ENCODE measurements at regions of chr7 and their contacts with region 1.

Region 1: DNA sequence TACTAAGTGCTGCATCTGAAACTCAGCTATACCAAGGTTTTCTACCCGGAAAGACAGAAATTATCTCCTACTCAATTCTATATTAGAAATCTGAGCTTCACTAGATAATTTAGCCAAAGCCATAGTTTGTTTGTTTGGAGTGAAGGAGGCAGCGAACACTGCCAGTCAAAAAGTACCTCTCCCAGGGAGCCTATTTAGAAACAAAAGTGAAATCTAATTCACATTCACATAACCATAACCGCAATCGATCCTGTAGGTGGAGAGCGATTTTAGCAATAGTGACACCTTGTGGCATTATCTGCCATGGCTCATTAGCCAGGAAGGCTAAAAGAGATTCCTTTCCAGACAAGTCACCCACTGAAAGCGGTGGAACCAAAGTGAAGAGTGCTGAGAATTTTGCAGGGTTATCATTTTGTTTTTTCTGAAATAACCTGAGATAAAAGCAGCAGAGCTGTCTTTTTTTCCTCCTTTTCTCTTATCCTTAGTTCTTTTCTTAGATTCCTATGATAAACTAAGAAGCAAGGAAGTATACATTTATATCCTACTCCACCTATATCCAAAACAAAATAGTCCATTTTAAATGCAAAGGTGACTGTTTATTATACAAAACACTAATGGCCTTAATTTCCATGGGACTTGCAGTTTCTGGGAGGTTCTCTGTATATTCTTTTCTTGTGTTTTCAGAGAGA is 83.7 kb upstream of the BET1 start:
- DNase-seq: no peak
- H3K4me3 ChIP-seq: peak overlapping the region; percentile 52
- H3K27ac ChIP-seq: no peak overlapping the region
- H3K4me1 ChIP-seq: peaks cover 16% of the 10 kb centered on the region
- H3K27me3 ChIP-seq: no peaks in the 10 kb centered on the region
- CTCF ChIP-seq: peak; percentile 90

Region 2: GRCh38 chr7:93799750-93800357 is 288.0 kb before region 1 on chr7:
- intact Hi-C with region 1: loop called (anchors 5 kb)
- DNase-seq: no peak
- H3K4me3 ChIP-seq: no peak overlapping the region
- H3K27ac ChIP-seq: no peak overlapping the region
- H3K4me1 ChIP-seq: no peaks in the 10 kb centered on the region
- H3K27me3 ChIP-seq: no peaks in the 10 kb centered on the region
- CTCF ChIP-seq: peak; percentile 58

Region 3: DNA sequence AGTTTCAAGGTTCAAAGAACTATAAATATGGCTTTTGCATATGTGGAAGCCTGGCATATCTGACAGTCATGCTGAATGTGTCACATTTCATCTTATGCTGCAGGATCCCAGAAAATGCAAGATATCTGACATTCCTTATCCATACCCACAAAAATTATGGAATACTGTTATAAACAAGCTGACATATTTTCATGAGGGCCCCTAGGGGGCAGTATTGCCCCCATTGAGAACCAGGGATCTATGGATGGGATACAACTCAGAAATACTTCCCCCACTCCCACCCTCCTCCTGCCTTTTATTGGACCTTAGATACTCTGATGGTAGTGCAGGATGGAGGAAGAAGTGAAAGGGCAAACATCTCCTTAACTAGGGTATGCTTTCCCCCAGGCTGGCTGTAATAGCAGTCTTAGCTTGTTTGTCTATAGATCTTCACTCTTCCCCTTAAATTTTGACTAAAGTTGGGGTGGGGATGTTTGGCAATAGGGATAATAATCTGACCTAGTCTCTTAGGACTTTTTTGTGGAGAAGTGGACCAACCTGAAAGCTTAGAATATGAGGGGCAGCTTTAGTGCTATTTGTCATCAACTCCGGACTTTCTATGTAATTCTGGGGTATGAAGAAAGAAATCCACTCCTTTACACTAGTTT is 184.9 kb before region 1 on chr7:
- intact Hi-C with region 1: loop called (anchors 2 kb)
- DNase-seq: no peak
- H3K4me3 ChIP-seq: no peak overlapping the region
- H3K27ac ChIP-seq: no peak overlapping the region
- H3K4me1 ChIP-seq: peaks cover 4% of the 10 kb centered on the region
- H3K27me3 ChIP-seq: no peaks in the 10 kb centered on the region
- CTCF ChIP-seq: peak; percentile 87

Measured in left ventricle myocardium inferior (tissue), 1 donor.